ENCODE measurements at regions of chr22 and their contacts with region 1.

Region 1: DNA sequence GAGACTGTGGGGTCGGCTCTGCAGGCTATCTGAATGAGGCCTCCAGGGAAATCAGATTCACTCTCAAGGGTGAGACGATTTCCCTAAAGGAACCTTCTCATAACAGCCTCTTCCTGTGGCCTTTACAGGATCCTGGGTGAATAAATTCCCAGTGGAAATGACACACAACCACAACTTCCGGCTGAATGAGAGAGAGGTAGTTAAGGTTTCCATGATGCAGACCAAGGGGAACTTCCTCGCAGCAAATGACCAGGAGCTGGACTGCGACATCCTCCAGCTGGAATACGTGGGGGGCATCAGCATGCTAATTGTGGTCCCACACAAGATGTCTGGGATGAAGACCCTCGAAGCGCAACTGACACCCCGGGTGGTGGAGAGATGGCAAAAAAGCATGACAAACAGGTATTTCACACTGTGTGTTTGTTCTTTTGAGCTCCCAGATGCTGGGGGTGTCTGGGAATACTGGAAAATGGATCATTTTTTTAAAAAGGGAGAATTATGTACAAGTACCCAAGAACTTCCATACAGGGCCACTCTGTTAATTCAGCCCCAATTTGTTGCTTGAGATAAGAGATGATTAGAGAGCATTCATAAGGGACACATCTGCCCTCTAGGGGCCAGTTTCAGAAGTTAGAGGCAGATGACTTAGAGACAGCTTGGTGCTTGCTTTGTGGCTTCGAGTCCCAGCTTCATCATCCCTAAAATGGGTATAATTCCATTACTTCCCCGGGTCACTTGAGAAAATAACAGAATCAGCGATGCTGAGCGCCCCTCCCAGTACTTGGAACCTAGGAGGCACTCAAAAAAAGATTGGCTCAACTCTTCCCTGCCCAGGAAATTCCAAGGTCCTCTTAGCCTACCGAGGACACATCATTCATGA is 10.2 kb downstream of the SERPIND1 start:
- DNase-seq: peak; percentile 85
- H3K4me3 ChIP-seq: peak overlapping the region in 1 of 3 experiments; percentile 32
- H3K27ac ChIP-seq: peak overlapping the region; percentile 97
- H3K4me1 ChIP-seq: peaks cover 55% of the 10 kb centered on the region
- H3K27me3 ChIP-seq: no peaks in the 10 kb centered on the region
- CTCF ChIP-seq: peak; percentile 76 to 77
- POLR2A ChIP-seq: peak; percentile 22

Region 2: GRCh38 chr22:20562461-20563247 is 221.4 kb before region 1 on chr22:
- CTCF ChIA-PET with region 1: interaction called, 3 read pairs
- POLR2A ChIA-PET with region 1: no interaction called
- dilution Hi-C with region 1: no loop called
- intact Hi-C with region 1: loop called (anchors 5 kb)
- DNase-seq: no peak
- H3K4me3 ChIP-seq: no peak overlapping the region
- H3K27ac ChIP-seq: no peak overlapping the region
- H3K4me1 ChIP-seq: no peaks in the 10 kb centered on the region
- H3K27me3 ChIP-seq: no peaks in the 10 kb centered on the region
- CTCF ChIP-seq: no peak
- POLR2A ChIP-seq: no peak

Region 3: GRCh38 chr22:20624161-20624616 is 159.9 kb before region 1 on chr22:
- CTCF ChIA-PET with region 1: no interaction called
- POLR2A ChIA-PET with region 1: no interaction called
- dilution Hi-C with region 1: no loop called
- intact Hi-C with region 1: no loop called
- DNase-seq: no peak
- H3K4me3 ChIP-seq: no peak overlapping the region
- H3K27ac ChIP-seq: no peak overlapping the region
- H3K4me1 ChIP-seq: no peaks in the 10 kb centered on the region
- H3K27me3 ChIP-seq: peaks cover 7 to 8% of the 10 kb centered on the region in 2 experiments
- CTCF ChIP-seq: no peak
- POLR2A ChIP-seq: no peak

Region 4: GRCh38 chr22:20741634-20742581 is 42.2 kb before region 1 on chr22:
- CTCF ChIA-PET with region 1: interaction called, 26 read pairs
- POLR2A ChIA-PET with region 1: no interaction called
- dilution Hi-C with region 1: no loop called
- intact Hi-C with region 1: no loop called
- DNase-seq: peak; percentile 34
- H3K4me3 ChIP-seq: no peak overlapping the region
- H3K27ac ChIP-seq: no peak overlapping the region
- H3K4me1 ChIP-seq: peaks cover 3% of the 10 kb centered on the region
- H3K27me3 ChIP-seq: no peaks in the 10 kb centered on the region
- CTCF ChIP-seq: peak; percentile 63 to 67
- POLR2A ChIP-seq: no peak

Region 5: DNA sequence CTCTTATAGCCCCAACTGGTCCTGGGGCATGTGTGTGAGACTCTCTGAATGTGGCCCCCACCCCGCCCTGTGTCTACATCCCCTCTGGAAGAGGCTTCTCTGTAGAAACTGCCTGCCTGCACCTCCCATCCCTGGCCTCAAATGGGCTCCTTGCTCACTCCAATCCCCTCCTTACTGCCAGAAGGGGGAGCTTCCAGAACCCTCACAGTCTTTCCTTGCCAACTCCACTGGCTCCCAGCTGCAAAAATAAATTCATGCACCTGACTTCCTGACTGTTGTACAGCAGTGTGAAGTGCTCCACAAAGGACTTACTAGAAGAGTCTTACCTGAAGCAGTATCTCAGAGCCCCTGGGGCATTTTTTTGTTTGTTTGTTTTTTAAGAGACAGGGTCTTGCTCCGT is 25.4 kb before region 1 on chr22:
- CTCF ChIA-PET with region 1: interaction called, 62 read pairs
- POLR2A ChIA-PET with region 1: no interaction called
- dilution Hi-C with region 1: no loop called
- intact Hi-C with region 1: no loop called
- DNase-seq: peak; percentile 15
- H3K4me3 ChIP-seq: no peak overlapping the region
- H3K27ac ChIP-seq: no peak overlapping the region
- H3K4me1 ChIP-seq: no peaks in the 10 kb centered on the region
- H3K27me3 ChIP-seq: no peaks in the 10 kb centered on the region
- CTCF ChIP-seq: peak in 1 of 2 donors; percentile 14
- POLR2A ChIP-seq: no peak

Region 6: GRCh38 chr22:20803696-20804324 is 19.7 kb after region 1 on chr22:
- CTCF ChIA-PET with region 1: interaction called, 11 read pairs
- POLR2A ChIA-PET with region 1: no interaction called
- dilution Hi-C with region 1: no loop called
- intact Hi-C with region 1: no loop called
- DNase-seq: peak; percentile 27
- H3K4me3 ChIP-seq: no peak overlapping the region
- H3K27ac ChIP-seq: no peak overlapping the region
- H3K4me1 ChIP-seq: no peaks in the 10 kb centered on the region
- H3K27me3 ChIP-seq: no peaks in the 10 kb centered on the region
- CTCF ChIP-seq: peak; percentile 42 to 69
- POLR2A ChIP-seq: no peak

Measured in endothelial cell of umbilical vein (primary cell).